ENCODE measurements at regions of chr6 and their contacts with region 1.

Region 1: DNA sequence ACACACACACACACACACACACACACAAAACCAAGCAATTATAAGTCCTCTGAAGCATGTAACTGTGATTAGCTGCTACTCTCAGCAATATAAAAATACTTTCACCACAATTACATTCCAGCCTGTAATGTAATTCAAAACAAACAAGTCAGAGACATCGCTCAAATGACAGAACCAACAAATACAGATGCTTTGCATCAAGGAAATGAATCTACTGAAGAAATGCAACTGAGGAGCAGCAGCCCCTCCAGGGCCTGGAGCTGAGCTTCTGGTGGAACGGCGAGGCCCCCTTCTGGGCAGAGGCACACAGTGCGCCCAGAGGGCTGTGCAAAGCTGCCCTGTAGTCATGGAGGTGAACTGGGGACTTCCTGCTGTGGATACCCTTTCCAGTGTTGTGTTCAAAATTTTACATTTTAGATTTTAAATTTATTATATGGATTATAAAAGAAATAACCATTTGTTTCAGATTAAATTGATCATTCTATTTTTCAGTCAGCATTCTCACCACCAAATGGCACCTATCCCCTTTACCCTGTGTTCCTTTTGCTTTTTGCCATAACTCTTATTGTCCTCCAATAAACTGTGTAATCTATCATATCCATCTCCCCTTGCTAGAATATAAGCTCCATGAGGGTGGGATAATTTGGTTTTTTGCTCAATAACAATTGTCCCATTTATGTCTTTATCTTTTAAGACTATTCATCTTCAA is 23.2 kb downstream of the ADAT2 start:
- DNase-seq: peak; percentile 76
- H3K4me3 Mint-ChIP-seq: no peak overlapping the region
- H3K27ac Mint-ChIP-seq: no peak overlapping the region
- H3K4me1 Mint-ChIP-seq: peaks cover 14% of the 10 kb centered on the region
- H3K27me3 Mint-ChIP-seq: no peaks in the 10 kb centered on the region

Region 2: DNA sequence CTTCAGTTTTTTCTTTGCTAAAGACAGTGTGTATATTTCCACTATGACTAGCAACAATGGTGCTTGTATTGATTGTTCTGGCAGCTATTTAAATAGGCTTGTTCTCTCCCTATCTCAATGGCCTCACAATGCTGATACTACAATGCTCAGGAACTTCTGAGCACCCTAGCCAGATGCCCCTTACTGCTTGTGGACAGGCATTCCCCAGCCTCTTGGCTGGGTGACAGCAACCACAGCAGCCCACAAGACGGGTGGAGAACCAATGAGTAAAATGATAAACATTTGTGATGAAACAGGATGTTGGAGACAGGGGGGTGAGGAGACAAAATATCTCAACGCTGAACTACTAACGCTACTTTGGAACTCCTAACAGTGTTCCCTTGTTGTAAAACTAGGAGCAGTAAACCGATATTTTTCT is 524.6 kb before region 1 on chr6:
- CTCF ChIA-PET with region 1: no interaction called
- intact Hi-C with region 1: no loop called
- DNase-seq: peak; percentile 81
- H3K4me3 Mint-ChIP-seq: peak overlapping the region; percentile 55
- H3K27ac Mint-ChIP-seq: peak overlapping the region; percentile 91
- H3K4me1 Mint-ChIP-seq: peaks cover 61% of the 10 kb centered on the region
- H3K27me3 Mint-ChIP-seq: no peaks in the 10 kb centered on the region

Region 3: GRCh38 chr6:143026696-143027449 is 400.4 kb before region 1 on chr6:
- CTCF ChIA-PET with region 1: interaction called, 10 read pairs
- intact Hi-C with region 1: loop called (anchors 2 kb)
- DNase-seq: peak; percentile 76
- H3K4me3 Mint-ChIP-seq: no peak overlapping the region
- H3K27ac Mint-ChIP-seq: no peak overlapping the region
- H3K4me1 Mint-ChIP-seq: peaks cover 7% of the 10 kb centered on the region
- H3K27me3 Mint-ChIP-seq: no peaks in the 10 kb centered on the region

Region 4: GRCh38 chr6:143232849-143233248 is 194.4 kb before region 1 on chr6:
- CTCF ChIA-PET with region 1: interaction called, 4 read pairs
- intact Hi-C with region 1: loop called (anchors 1 kb)
- DNase-seq: peak; percentile 59
- H3K4me3 Mint-ChIP-seq: no peak overlapping the region
- H3K27ac Mint-ChIP-seq: no peak overlapping the region
- H3K4me1 Mint-ChIP-seq: no peaks in the 10 kb centered on the region
- H3K27me3 Mint-ChIP-seq: no peaks in the 10 kb centered on the region

Region 5: DNA sequence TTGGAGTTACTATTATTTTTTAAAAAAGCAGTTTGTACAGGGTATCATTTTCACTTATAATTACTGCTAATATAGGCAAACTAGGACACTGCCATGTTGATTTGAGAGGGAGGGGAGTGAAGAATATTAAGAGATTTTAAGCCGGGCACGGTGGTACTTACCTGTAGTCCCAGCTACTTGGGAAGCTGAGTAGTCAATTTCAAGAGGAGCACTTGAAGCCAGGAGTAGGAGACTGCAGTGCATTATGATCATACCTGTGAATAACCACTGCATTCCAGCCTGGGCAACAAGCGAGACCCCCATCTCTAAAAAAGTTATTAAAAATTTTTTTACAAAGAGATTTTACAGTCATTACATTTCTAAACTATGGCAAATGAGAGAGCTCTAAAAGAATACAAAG is 12.5 kb before region 1 on chr6:
- CTCF ChIA-PET with region 1: interaction called, 17 read pairs
- intact Hi-C with region 1: no loop called
- DNase-seq: no peak
- H3K4me3 Mint-ChIP-seq: no peak overlapping the region
- H3K27ac Mint-ChIP-seq: no peak overlapping the region
- H3K4me1 Mint-ChIP-seq: peaks cover 2% of the 10 kb centered on the region
- H3K27me3 Mint-ChIP-seq: no peaks in the 10 kb centered on the region

Region 6: GRCh38 chr6:144847916-144848315 is 1420.7 kb after region 1 on chr6:
- CTCF ChIA-PET with region 1: no interaction called
- intact Hi-C with region 1: no loop called
- DNase-seq: no peak
- H3K4me3 Mint-ChIP-seq: no peak overlapping the region
- H3K27ac Mint-ChIP-seq: peak overlapping the region; percentile 57
- H3K4me1 Mint-ChIP-seq: no peaks in the 10 kb centered on the region
- H3K27me3 Mint-ChIP-seq: no peaks in the 10 kb centered on the region

Measured in activated naive CD4-positive, alpha-beta T cell treated with anti-CD3 and anti-CD28 coated beads for 36 hours (primary cell).